Aorta (tissue), 5 donors: ENCODE measurements at regions of chr10 and their contacts with region 1.

Region 1: DNA sequence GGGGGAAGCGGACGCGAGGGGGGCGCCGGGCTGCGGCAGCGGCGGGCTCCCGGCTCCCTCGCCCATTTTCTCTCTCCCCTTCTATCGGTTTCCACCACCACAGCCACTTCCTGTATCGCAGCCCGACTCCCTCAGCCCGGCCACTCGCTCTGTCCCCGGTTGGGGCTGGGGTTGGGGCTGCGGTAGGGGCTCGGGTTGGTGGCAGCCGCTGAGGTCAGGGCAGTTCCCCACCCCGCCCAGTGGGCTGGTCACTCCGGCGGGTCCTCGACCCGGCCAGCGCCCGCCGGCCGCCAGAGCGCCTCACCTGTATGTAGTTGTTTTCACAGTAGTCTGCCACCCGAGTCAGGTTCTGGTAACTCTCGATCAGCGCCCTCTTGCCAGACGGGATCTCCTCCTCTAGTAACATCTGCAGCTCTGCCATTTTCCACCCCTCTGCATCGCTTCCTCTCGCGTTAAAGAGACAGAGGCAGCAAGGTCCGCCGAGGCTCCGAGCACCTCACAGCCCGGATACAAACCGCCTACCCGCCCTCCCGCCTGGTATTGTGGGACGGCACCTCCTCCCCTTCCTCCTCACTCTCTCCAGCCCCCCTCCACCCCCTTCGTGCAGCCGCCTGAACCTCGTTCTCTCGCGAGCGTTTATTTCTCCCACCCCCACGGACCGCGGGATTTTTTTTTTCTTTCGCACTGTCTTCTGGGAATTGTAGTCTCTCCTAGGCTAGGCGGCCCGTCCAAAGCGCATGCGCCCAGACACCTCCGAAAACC is at the start of gene ABI1:
- DNase-seq: peak; percentile 99
- ATAC-seq: peak; percentile 99
- H3K4me3 ChIP-seq: peak within 1 kb of the TSS; percentile 89 to 93
- H3K27ac ChIP-seq: peak within 1 kb of the TSS; percentile 69 to 85
- H3K4me1 ChIP-seq: peaks cover 2 to 3% of the 10 kb centered on the region in 2 donors
- H3K27me3 ChIP-seq: no peaks in the 10 kb centered on the region
- total RNA-seq, gene ABI1: 50.2 to 60.3 TPM

Region 2: DNA sequence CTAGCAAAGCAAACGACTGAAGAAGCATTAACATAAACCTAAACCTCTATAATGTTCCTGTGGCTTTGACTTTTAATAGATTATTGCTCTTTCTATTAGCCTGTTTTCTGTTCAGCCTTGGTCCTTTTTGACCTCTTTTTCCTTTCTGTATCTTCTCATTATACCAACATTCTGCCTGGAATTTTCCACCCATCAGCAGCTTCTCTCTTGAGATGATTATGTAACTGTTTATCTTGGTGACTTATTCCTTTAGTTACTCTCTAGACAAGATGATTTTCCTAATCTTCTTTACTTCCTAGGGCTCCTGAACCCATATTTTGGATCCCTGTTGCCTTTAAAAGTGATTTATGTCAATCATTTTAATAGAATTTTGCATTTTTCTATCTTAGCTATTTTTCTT is 845.5 kb before region 1 on chr10:
- intact Hi-C with region 1: no loop called
- DNase-seq: no peak
- ATAC-seq: no peak
- H3K4me3 ChIP-seq: no peak overlapping the region
- H3K27ac ChIP-seq: no peak overlapping the region
- H3K4me1 ChIP-seq: no peaks in the 10 kb centered on the region
- H3K27me3 ChIP-seq: no peaks in the 10 kb centered on the region

Region 3: DNA sequence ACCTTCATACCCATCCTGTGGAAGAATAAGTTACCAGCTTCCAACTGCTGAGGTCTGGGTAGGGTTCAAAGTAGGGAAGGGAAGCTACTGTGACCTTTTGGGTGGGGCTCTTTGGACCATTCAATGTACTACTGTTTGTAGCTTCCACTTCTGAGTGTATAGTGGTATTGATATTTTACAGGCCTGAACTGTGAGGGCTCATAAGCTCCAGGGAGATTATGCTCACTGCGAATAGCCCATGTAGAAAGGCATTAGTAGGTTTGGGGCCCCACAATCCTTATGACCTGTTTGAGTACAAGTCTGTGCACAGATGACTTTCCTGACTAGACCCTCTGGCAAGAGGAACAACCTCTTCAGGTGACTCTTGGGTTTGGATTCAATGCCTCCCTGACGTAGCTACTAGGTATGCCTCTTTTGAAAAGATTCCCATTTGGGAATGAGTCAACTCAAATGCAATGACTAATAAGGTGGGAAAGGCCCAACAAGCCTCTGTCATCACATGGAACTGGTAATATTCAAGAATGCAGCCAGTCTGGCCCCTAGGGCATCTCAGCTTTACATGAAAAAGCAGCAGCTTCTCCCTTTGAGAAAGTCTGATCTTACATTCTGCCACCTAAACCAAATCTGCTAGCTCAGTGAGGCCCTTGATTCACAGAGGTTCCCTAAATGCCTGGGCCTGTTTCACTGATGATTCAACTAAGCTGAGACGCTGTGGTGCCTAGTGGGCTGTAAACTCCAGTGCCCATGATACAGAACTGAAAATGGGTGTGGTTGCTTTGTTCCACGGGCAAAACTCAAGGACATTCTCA is 79.6 kb before region 1 on chr10:
- intact Hi-C with region 1: loop called in 1 of 2 experiments (anchors 10 kb)
- DNase-seq: no peak
- ATAC-seq: no peak
- H3K4me3 ChIP-seq: no peak overlapping the region
- H3K27ac ChIP-seq: no peak overlapping the region
- H3K4me1 ChIP-seq: peaks cover 4 to 7% of the 10 kb centered on the region in 2 donors
- H3K27me3 ChIP-seq: no peaks in the 10 kb centered on the region